OCI-LY7 (cell line): ENCODE measurements at regions of chr11 and their contacts with region 1.

Region 1: DNA sequence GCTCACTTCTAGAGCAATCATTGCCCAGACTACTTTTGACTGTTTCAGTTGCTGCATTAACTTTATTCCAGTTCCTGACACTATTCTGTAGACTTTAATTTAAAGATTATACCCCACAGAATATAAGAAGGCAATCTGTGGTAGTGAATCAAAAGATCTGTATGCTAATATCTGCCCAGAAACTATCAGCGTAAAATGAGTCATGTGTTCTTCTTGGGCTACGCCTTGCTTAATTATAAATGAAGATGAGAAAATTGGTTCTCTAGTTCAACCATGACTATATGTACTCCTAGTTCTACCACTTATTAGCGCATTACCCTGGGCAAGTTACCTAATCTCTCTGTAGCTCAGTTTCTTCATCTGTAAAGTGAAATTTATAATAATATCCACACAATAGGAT is 128.5 kb downstream of the CWF19L2 start:
- DNase-seq: no peak
- H3K4me3 ChIP-seq: no peak overlapping the region
- H3K27ac ChIP-seq: no peak overlapping the region
- H3K4me1 ChIP-seq: no peaks in the 10 kb centered on the region
- CTCF ChIP-seq: no peak

Region 2: DNA sequence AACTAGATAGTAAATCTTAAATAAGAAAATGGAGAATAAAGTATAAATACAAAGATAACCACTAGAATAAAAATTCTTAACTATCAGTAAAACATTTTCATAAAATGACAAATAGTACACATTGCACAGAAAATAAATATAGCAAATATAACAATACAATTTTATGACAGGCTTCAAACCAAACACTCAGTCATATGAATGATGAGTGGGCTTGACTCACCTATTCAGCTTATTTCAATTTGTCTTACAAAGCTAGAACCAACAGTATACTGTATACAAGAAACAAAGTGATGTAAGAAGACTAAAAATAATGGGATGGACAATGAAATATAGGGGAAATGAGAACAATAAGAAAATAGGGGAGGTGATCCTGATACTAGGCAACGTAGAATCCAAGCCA is 12.7 kb before region 1 on chr11:
- CTCF ChIA-PET with region 1: no interaction called
- POLR2A ChIA-PET with region 1: interaction called, 10 read pairs
- intact Hi-C with region 1: no loop called
- DNase-seq: no peak
- H3K4me3 ChIP-seq: no peak overlapping the region
- H3K27ac ChIP-seq: no peak overlapping the region
- H3K4me1 ChIP-seq: no peaks in the 10 kb centered on the region
- CTCF ChIP-seq: no peak